MCF 10A (cell line): ENCODE measurements at regions of chr6 and their contacts with region 1.

Region 1: GRCh38 chr6:31139599-31139998 is 733 bp upstream of the PSORS1C2 start:
- DNase-seq: no peak
- H3K4me3 Mint-ChIP-seq: no peak overlapping the region
- H3K27ac Mint-ChIP-seq: no peak overlapping the region
- H3K4me1 Mint-ChIP-seq: peaks cover 15% of the 10 kb centered on the region
- H3K27me3 Mint-ChIP-seq: no peaks in the 10 kb centered on the region
- CTCF ChIP-seq: no peak

Region 2: GRCh38 chr6:31157513-31158139 is 18.0 kb after region 1 on chr6 and contains the start of gene CCHCR1:
- CTCF ChIA-PET with region 1: interaction called, 14 read pairs
- POLR2A ChIA-PET with region 1: interaction called, 4 read pairs
- intact Hi-C with region 1: no loop called
- DNase-seq: no peak
- H3K4me3 Mint-ChIP-seq: peak within 1 kb of the TSS; percentile 88
- H3K27ac Mint-ChIP-seq: peak within 1 kb of the TSS; percentile 92
- H3K4me1 Mint-ChIP-seq: peaks cover 22% of the 10 kb centered on the region
- H3K27me3 Mint-ChIP-seq: no peaks in the 10 kb centered on the region
- CTCF ChIP-seq: no peak
- total RNA-seq, gene CCHCR1: 18.4 and 21.4 TPM in 2 replicates

Region 3: DNA sequence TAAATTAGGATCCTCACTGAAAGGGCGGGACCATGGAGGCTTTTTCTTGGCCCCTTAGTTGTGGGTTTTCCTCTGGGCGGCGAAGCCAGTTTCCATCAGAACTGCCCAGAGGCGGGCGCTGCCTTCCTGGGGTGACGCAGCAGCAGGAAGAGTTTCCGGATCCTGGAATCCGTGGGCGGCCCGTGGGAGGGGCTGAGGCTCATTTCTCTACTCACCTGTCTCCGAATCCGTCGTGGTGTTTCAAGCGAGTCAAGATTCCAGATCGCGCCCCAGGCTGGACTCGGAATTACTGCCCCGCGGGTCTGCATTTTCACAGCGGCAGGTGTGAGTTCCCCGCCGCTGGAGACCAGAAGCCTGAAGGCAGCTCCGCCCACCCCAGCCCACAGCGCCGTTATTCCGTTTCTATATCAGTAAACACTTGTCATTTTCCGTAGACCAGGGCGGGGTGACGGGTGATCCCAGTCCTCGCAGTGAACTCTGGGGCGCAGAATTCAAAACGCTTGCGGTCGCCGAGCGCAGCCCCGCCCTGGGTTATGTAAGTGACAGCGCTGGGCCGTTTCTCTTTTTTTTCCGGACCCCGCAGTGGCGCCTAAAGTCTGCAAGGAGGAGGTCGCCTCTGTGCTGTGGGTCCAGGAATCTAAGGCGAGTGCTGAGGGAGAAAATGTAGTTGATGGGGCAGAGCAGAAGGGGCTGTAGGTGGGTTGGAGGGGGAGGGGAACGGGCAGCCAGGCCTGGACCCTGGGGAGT is 58.1 kb after region 1 on chr6:
- CTCF ChIA-PET with region 1: interaction called, 30 read pairs
- POLR2A ChIA-PET with region 1: interaction called, 5 read pairs
- intact Hi-C with region 1: loop called (anchors 1 kb)
- DNase-seq: peak; percentile 91
- H3K4me3 Mint-ChIP-seq: peak overlapping the region; percentile 86
- H3K27ac Mint-ChIP-seq: peak overlapping the region; percentile 95
- H3K4me1 Mint-ChIP-seq: peaks cover 10% of the 10 kb centered on the region
- H3K27me3 Mint-ChIP-seq: no peaks in the 10 kb centered on the region
- CTCF ChIP-seq: no peak